Mammary epithelial cell (primary cell): ENCODE measurements at regions of chr9 and their contacts with region 1.

Region 1: DNA sequence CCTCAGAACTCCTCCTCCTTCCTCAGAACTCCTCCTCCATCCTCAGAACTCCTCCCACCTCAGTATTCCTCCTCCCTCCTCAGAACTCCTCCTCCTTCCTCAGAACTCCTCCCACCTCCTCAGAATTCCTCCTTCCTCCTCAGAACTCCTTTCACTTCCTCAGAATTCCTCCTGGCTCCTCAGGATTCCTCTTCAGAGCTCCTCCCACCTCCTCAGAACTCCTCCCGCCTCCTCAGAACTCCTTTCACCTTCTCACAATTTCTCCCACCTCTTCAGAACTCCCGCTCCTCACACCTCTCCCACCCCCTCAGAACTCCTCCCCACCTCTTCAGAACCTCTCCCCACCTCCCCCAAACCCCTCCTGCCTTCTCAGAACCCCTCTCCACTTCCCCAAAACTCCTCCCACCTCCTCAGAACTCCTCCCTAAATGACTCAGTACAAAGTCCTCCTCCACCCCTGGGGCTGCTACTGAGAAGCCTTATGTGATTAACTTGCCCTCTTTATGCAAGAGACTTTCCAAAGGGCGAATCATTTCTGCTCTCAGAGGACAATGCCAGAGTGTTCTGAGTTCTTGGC is 23.2 kb downstream of the SLC46A2 start:
- DNase-seq: peak; percentile 90
- H3K4me3 ChIP-seq: no peak overlapping the region
- H3K27ac ChIP-seq: peak overlapping the region; percentile 14
- H3K4me1 ChIP-seq: peaks cover 7% of the 10 kb centered on the region
- H3K27me3 ChIP-seq: no peaks in the 10 kb centered on the region
- CTCF ChIP-seq: no peak

Region 2: GRCh38 chr9:112887381-112887780 is 19.9 kb after region 1 on chr9:
- CTCF ChIA-PET with region 1: no interaction called
- dilution Hi-C with region 1: no loop called
- in situ Hi-C with region 1: no loop called
- intact Hi-C with region 1: no loop called
- DNase-seq: no peak
- H3K4me3 ChIP-seq: no peak overlapping the region
- H3K27ac ChIP-seq: no peak overlapping the region
- H3K4me1 ChIP-seq: peaks cover 23% of the 10 kb centered on the region
- H3K27me3 ChIP-seq: no peaks in the 10 kb centered on the region
- CTCF ChIP-seq: no peak

Region 3: GRCh38 chr9:112914514-112914913 is 47.0 kb after region 1 on chr9:
- CTCF ChIA-PET with region 1: no interaction called
- dilution Hi-C with region 1: no loop called
- in situ Hi-C with region 1: no loop called
- intact Hi-C with region 1: loop called (anchors 1 kb)
- DNase-seq: no peak
- H3K4me3 ChIP-seq: no peak overlapping the region
- H3K27ac ChIP-seq: no peak overlapping the region
- H3K4me1 ChIP-seq: peaks cover 12% of the 10 kb centered on the region
- H3K27me3 ChIP-seq: no peaks in the 10 kb centered on the region
- CTCF ChIP-seq: no peak

Region 4: GRCh38 chr9:112925058-112925641 is 57.6 kb after region 1 on chr9:
- CTCF ChIA-PET with region 1: no interaction called
- dilution Hi-C with region 1: no loop called
- in situ Hi-C with region 1: no loop called
- intact Hi-C with region 1: no loop called
- DNase-seq: peak; percentile 20
- H3K4me3 ChIP-seq: no peak overlapping the region
- H3K27ac ChIP-seq: no peak overlapping the region
- H3K4me1 ChIP-seq: no peaks in the 10 kb centered on the region
- H3K27me3 ChIP-seq: no peaks in the 10 kb centered on the region
- CTCF ChIP-seq: peak; percentile 42 to 59

Region 5: GRCh38 chr9:112945620-112946208 is 78.2 kb after region 1 on chr9:
- CTCF ChIA-PET with region 1: no interaction called
- dilution Hi-C with region 1: no loop called
- in situ Hi-C with region 1: no loop called
- intact Hi-C with region 1: no loop called
- DNase-seq: no peak
- H3K4me3 ChIP-seq: no peak overlapping the region
- H3K27ac ChIP-seq: no peak overlapping the region
- H3K4me1 ChIP-seq: no peaks in the 10 kb centered on the region
- H3K27me3 ChIP-seq: no peaks in the 10 kb centered on the region
- CTCF ChIP-seq: no peak

Region 6: GRCh38 chr9:113018247-113018646 is 150.7 kb after region 1 on chr9:
- CTCF ChIA-PET with region 1: no interaction called
- dilution Hi-C with region 1: no loop called
- in situ Hi-C with region 1: no loop called
- intact Hi-C with region 1: no loop called
- DNase-seq: no peak
- H3K4me3 ChIP-seq: no peak overlapping the region
- H3K27ac ChIP-seq: no peak overlapping the region
- H3K4me1 ChIP-seq: no peaks in the 10 kb centered on the region
- H3K27me3 ChIP-seq: no peaks in the 10 kb centered on the region
- CTCF ChIP-seq: no peak